ENCODE measurements at regions of chr5 and their contacts with region 1.

Region 1: DNA sequence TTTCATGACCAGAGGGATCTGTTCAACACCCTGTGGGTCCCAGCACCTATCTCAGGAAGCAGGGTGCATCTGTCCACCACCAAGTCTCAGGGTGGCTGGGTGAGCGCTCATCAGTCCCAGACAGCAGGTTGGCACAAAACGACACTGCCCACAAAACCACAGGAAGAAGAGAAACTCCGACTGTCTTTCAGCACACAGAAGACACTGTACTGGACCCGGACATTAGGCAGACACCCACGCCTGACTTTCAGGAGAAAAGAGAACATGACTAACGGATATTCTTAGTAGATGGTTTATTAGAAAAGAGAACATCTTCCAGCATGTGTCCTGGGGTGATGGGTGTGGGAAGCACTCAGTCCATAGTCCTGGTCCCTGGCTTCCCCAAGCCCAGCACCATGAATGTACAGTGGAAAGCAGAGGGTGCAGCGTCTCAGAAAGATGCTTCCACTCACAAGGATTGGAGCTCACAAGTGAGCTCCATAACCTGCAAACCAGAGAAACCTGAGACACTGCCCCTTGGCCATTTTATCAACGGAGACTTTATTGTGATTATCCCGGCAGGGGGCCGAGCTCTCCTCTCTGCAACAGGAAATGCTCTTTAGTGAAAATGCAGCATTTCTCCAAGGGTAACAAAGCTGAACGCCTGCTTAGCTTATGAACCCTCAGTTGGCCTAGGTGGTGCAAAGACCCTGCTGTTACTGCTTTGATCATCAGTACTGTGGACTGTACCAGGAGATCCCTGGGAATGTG is 35.8 kb upstream of the LCP2 start:
- DNase-seq: peak; percentile 79
- H3K4me3 Mint-ChIP-seq: peak overlapping the region; percentile 64
- H3K27ac Mint-ChIP-seq: peak overlapping the region; percentile 72
- H3K4me1 Mint-ChIP-seq: peaks cover 26% of the 10 kb centered on the region
- H3K27me3 Mint-ChIP-seq: no peaks in the 10 kb centered on the region

Region 2: DNA sequence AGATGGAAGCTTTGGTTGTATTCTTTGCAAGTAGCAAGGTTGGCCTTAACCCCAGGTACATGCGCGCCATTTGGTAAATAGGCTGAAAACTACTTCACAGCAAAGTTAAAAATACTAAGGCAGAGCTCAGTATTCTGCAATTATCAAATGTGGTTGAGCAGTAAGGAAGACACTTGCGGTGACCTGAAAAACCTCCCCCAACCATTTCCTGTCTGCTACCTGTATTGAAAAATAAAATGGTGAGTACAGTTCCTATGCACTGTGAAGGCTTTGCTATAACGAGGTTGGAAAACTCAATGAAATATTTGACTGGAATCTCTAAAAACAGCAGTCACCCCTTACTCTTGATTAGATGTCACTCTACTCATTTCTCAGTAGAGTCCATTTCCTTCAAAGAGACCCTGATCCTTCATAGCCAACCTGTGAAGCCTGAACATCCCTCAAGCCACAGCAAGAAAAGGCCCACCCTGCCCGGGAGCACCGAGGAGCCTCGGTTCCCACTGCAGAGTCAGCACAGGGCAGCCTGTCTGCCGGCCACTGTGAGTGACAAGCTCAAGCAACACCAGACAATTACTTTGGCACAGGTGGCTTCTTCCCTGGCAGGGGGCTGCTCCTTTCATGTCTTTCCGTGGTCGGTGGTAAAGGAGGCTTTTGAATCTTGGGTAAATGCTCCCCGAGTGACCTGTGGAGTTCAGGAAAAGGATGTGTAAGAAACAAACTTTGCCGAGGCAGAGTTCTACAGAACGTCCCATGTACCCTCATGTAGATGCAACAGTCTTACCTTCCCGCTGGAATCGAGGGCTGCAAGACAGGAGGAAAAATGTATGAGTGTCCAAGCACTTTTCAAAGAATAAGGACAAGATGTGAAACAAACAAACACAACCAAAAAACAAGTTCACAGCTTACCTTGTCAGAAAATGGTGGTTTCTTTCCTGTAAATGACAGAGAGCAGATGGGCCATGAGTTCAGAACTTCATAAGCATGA is 71.0 kb before region 1 on chr5:
- CTCF ChIA-PET with region 1: interaction called, 129 read pairs
- POLR2A ChIA-PET with region 1: interaction called, 290 read pairs
- DNase-seq: peak; percentile 72
- H3K4me3 Mint-ChIP-seq: peak overlapping the region; percentile 53
- H3K27ac Mint-ChIP-seq: peak overlapping the region; percentile 95
- H3K4me1 Mint-ChIP-seq: peaks cover 84% of the 10 kb centered on the region
- H3K27me3 Mint-ChIP-seq: no peaks in the 10 kb centered on the region

Region 3: DNA sequence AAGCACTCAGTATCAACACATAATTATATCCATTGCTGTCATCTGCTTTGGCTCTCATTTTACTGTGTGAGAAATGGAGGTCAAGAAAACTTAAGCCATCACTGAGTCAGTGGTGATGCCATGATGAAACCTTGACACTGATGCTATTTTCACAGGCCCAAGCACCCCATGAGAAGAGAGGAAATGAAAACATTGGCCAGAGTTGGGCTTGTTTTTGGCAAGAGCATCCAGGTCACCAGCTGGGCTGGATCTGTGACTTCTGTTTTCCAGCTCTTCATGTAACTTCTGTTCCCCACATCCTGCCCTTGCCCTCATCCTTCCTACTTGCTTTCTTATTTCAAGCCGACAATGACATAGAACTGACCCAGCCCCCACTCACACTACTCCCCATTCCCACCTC is 45.8 kb before region 1 on chr5:
- CTCF ChIA-PET with region 1: interaction called, 76 read pairs
- POLR2A ChIA-PET with region 1: interaction called, 375 read pairs
- DNase-seq: no peak
- H3K4me3 Mint-ChIP-seq: peak overlapping the region; percentile 0
- H3K27ac Mint-ChIP-seq: peak overlapping the region; percentile 74
- H3K4me1 Mint-ChIP-seq: peaks cover 99% of the 10 kb centered on the region
- H3K27me3 Mint-ChIP-seq: no peaks in the 10 kb centered on the region

Region 4: DNA sequence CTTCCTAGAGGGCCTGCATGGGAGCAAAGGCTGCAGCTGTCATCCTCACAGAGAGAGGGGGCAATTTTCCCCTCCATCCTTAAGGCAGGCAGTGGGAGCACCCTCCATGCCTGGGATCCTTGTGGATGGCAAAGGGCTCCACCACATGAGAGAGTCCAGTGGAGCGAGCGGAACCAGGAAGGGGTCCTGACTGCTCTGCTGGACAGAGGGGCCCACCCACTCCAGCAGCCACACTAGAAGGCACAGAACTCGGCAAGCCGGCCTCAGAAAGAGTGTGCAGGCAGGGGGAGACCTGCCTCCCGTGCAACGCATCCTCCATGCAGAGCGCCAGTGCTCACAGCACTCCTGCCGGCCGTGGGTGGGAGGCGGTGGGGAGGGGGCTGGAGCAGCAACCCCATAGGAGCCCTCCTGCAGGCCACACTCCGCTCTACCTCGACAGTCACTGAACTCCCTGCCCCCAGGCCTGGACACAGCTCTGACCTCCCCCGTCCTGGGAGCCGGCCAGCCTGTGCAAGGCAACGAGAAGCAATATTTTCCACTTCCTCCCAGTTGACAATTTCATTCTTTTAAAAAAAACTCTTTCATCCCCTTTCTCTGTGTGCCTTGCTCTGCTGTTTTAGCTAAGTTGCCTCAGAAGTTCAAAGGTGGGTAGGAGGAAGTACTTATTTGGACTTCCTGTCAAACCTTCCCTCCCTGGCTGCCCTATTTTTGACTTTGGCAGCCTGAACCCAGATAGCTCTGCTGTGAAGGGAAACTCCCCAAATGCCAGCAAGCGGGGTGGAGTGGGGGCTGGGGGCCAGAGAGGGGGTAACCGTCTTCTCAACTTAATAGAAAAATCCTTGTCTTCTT is 30.5 kb before region 1 on chr5:
- CTCF ChIA-PET with region 1: interaction called, 76 read pairs
- POLR2A ChIA-PET with region 1: interaction called, 375 read pairs
- DNase-seq: peak; percentile 72
- H3K4me3 Mint-ChIP-seq: peak overlapping the region; percentile 54
- H3K27ac Mint-ChIP-seq: peak overlapping the region; percentile 84
- H3K4me1 Mint-ChIP-seq: peaks cover 72% of the 10 kb centered on the region
- H3K27me3 Mint-ChIP-seq: no peaks in the 10 kb centered on the region

Region 5: GRCh38 chr5:170319301-170319700 is 14.0 kb before region 1 on chr5:
- CTCF ChIA-PET with region 1: interaction called, 14 read pairs
- POLR2A ChIA-PET with region 1: interaction called, 37 read pairs
- DNase-seq: no peak
- H3K4me3 Mint-ChIP-seq: no peak overlapping the region
- H3K27ac Mint-ChIP-seq: no peak overlapping the region
- H3K4me1 Mint-ChIP-seq: peaks cover 5% of the 10 kb centered on the region
- H3K27me3 Mint-ChIP-seq: peaks cover 3% of the 10 kb centered on the region

Region 6: GRCh38 chr5:170393235-170393634 is 59.9 kb after region 1 on chr5:
- CTCF ChIA-PET with region 1: no interaction called
- POLR2A ChIA-PET with region 1: no interaction called
- DNase-seq: peak; percentile 35
- H3K4me3 Mint-ChIP-seq: peak overlapping the region; percentile 40
- H3K27ac Mint-ChIP-seq: peak overlapping the region; percentile 16
- H3K4me1 Mint-ChIP-seq: peaks cover 20% of the 10 kb centered on the region
- H3K27me3 Mint-ChIP-seq: peaks cover 33% of the 10 kb centered on the region

Measured in activated CD4-positive, alpha-beta memory T cell treated with anti-CD3 and anti-CD28 coated beads, Interleukin-2, amount 10 ng/mL, durations not matched to agents 7 days and 5 days (primary cell).